HEK293 (cell line): ENCODE measurements at regions of chr19 and their contacts with region 1.

Region 1: DNA sequence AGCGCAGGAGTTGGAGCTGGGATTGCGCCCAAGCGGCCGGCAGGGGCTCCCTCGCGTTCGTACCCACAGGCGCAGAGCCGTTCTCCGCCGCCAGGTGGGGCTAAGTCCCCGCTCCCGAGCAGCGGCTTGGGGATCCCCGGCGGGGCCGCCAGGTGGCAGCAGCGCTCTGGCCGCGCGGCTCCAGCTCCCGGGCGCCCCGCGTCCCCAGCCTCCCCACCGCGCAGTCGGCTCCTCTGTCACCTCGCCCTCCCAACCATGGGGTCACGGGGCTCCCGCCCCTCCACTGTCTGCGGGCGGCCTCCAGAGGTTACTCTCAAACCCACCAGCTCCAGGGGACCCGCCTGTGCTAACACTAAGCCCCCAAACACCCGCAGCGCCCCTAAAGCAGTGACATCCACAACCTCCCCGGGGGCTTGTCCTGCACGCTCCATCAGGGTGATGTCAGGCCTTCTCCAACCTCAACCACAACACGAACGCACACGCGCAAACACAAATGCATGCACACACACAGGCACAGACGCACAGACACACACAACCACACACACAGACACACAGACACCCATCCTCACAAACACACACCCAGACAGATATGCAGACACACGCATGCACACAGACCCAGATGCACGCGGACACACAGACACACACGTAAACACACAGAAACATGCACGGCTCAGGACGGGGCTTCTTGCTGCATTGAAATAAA is 18.4 kb upstream of the KCTD15 start:
- H3K4me3 ChIP-seq: no peak overlapping the region
- H3K27ac ChIP-seq: no peak overlapping the region
- H3K4me1 ChIP-seq: peaks cover 4% of the 10 kb centered on the region
- CTCF ChIP-seq: peak; percentile 100

Region 2: GRCh38 chr19:33758541-33759013 is 19.7 kb before region 1 on chr19:
- CTCF ChIA-PET with region 1: interaction called, 17 read pairs
- POLR2A ChIA-PET with region 1: no interaction called
- H3K4me3 ChIP-seq: no peak overlapping the region
- H3K27ac ChIP-seq: no peak overlapping the region
- H3K4me1 ChIP-seq: 0 out of 2 replicates have a peak, but pooled peaks cover 2% of the 10 kb centered on the region
- CTCF ChIP-seq: no peak

Region 3: GRCh38 chr19:33878030-33878544 is 99.8 kb after region 1 on chr19:
- CTCF ChIA-PET with region 1: interaction called, 21 read pairs
- POLR2A ChIA-PET with region 1: no interaction called
- H3K4me3 ChIP-seq: no peak overlapping the region
- H3K27ac ChIP-seq: no peak overlapping the region
- H3K4me1 ChIP-seq: no peaks in the 10 kb centered on the region
- CTCF ChIP-seq: no peak

Region 4: DNA sequence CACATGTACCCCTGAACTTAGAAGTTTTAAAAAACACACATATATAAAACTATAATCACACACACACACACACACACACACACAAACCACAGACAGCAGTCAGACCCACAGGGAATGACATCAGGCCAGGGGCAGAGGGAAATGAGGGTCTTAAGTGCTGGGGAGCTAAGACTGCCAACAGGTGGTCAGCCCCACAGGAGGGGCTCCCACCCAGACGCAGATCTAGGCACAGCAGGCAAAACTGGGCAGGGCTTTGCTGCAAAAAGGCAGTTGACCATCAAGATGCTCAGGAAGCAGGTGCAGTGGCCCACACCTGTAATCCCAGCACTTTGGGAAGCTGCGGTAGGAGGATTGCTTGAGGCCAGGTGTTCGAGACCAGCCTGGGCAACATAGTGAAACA is 273.0 kb after region 1 on chr19:
- CTCF ChIA-PET with region 1: interaction called, 13 read pairs
- POLR2A ChIA-PET with region 1: no interaction called
- H3K4me3 ChIP-seq: no peak overlapping the region
- H3K27ac ChIP-seq: no peak overlapping the region
- H3K4me1 ChIP-seq: no peaks in the 10 kb centered on the region
- CTCF ChIP-seq: no peak

Region 5: GRCh38 chr19:34120846-34121639 is 342.8 kb after region 1 on chr19:
- CTCF ChIA-PET with region 1: interaction called, 14 read pairs
- POLR2A ChIA-PET with region 1: no interaction called
- H3K4me3 ChIP-seq: no peak overlapping the region
- H3K27ac ChIP-seq: no peak overlapping the region
- H3K4me1 ChIP-seq: peaks cover 7% of the 10 kb centered on the region; the same call in 1 of the 2 replicates
- CTCF ChIP-seq: peak; percentile 52; the same call in 1 of the 2 replicates

Region 6: GRCh38 chr19:34178274-34178610 is 400.0 kb after region 1 on chr19:
- CTCF ChIA-PET with region 1: interaction called, 10 read pairs
- POLR2A ChIA-PET with region 1: interaction called, 3 read pairs
- H3K4me3 ChIP-seq: no peak overlapping the region
- H3K27ac ChIP-seq: peak overlapping the region; percentile 46; the same call in 1 of the 2 replicates
- H3K4me1 ChIP-seq: peaks cover 83% of the 10 kb centered on the region
- CTCF ChIP-seq: no peak